ENCODE measurements at regions of chr22 and their contacts with region 1.

Region 1: DNA sequence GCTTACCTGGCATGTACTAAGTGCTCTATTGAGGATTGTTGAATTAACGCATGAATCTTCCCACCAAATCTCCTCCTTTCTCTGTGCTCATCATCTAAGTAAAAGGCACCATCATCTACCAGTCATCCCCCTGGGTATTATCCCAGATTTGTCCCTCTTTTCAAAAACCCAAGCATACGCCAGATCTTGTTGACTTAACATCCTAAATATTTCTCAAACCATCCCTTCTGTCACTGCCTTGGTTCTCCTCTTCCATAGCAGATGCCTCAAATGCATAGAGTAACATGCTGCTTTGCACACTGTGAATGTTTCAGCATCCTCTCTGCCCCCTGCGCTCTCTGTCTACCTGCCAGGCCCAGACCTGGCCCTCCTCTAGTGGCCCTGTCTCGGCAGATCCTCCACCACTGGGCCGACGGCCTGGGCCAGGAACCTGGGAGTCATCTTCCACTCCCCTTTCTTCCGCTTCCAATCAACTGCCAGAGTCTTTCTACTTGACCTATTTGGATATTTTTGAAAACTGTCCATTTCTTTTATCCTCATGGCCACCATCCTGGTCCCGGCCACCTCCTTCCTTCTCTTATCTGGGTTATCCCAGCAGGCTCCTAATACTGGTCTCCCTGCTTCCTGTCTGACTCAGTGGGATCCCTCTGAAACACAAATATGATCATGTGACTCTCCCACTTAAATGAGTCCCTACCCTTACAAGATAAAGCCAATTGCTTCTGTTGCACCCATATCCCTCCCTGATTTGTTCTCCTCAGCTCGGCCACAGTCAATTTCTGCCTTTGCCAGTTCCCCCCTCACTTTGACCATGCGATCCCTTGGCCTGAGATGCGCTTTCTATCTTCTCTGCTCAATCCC is 3.4 kb upstream of the TAB1 start:
- DNase-seq: no peak
- ATAC-seq: no peak
- H3K4me3 Mint-ChIP-seq: no peak overlapping the region
- H3K27ac Mint-ChIP-seq: no peak overlapping the region
- H3K4me1 Mint-ChIP-seq: peaks cover 9% of the 10 kb centered on the region
- H3K27me3 Mint-ChIP-seq: no peaks in the 10 kb centered on the region

Region 2: DNA sequence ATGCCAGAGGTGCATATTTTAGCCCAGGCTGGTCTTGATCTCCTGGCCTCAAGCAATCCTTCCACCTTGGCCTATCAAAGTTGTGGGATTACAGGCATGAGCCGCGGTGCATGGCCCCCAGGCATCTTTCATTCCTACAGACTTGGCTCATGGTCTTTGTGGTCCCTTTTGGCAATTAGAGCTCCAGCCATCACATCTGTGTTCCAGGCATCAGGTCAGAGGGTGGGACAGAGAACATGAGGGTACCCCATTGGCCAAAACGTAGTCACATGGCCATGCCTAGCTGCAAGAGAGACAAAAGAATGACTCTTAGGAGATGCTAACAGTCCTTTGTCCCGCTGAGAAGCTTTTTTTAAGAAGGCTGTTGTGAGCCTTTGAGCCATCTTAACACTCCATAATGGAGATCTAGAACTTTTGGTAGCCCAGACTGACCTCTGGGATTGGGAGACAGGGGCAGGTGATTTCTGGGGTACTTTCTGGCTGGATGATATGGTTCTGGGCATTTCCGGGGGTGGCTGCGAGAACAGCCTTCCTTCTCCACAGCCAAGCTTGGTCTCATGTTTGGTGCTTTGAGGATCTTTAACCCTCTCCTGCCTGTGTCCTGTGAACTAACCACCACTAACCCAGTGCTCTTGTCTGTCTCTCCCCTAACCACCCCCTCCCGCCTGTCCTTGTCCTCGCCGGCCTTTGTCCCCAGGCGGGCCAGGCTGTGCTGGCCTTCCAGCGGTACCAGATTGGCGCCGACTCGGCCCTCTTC is 15.0 kb before region 1 on chr22:
- CTCF ChIA-PET with region 1: no interaction called
- POLR2A ChIA-PET with region 1: no interaction called
- DNase-seq: no peak
- ATAC-seq: no peak
- H3K4me3 Mint-ChIP-seq: no peak overlapping the region
- H3K27ac Mint-ChIP-seq: no peak overlapping the region
- H3K4me1 Mint-ChIP-seq: no peaks in the 10 kb centered on the region
- H3K27me3 Mint-ChIP-seq: no peaks in the 10 kb centered on the region

Region 3: GRCh38 chr22:39414886-39415285 is 18.7 kb after region 1 on chr22:
- CTCF ChIA-PET with region 1: interaction called, 21 read pairs
- POLR2A ChIA-PET with region 1: interaction called, 11 read pairs
- DNase-seq: no peak
- ATAC-seq: no peak
- H3K4me3 Mint-ChIP-seq: no peak overlapping the region
- H3K27ac Mint-ChIP-seq: peak overlapping the region; percentile 20
- H3K4me1 Mint-ChIP-seq: peaks cover 44% of the 10 kb centered on the region
- H3K27me3 Mint-ChIP-seq: no peaks in the 10 kb centered on the region

Region 4: DNA sequence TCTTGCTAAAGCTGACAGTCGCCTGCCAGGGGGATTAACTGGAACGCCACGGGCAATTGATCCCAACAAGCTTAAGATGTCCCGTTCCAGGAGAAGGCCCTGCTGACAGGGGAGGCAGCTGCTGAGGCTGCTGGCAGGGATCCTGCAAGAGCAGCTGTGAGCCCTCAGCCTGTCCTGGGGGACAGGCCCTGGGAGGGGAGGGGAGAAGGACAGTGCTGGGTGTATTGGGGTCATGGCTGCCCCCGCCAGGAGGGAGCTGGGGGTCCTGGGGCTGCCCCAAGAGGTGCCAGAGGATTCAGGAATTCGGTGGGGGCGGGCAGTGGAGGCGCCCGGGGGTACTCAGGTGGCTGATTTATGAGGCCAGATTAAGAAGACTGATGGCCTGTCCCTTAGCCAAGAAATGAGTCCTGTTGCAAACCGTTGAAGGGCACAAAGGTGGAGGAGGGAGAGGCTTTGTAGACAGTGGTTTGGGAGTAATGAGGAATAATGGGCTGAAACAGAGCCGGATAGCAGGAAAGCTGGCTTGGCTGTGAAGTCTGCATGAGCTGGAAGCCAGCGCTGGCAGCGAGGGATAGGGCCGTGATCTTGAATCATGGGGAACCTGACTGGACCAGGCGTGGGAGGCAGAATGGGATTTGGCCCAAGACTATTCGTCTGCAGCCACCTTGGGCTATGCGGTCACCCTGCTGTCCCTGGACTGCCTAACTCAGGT is 307.9 kb after region 1 on chr22:
- CTCF ChIA-PET with region 1: no interaction called
- POLR2A ChIA-PET with region 1: no interaction called
- DNase-seq: no peak
- ATAC-seq: no peak
- H3K4me3 Mint-ChIP-seq: no peak overlapping the region
- H3K27ac Mint-ChIP-seq: no peak overlapping the region
- H3K4me1 Mint-ChIP-seq: no peaks in the 10 kb centered on the region
- H3K27me3 Mint-ChIP-seq: no peaks in the 10 kb centered on the region